Activated B cell treated with CpG ODN at 0.5 μM for 24 hours (primary cell): ENCODE measurements at regions of chr16 and their contacts with region 1.

Region 1: DNA sequence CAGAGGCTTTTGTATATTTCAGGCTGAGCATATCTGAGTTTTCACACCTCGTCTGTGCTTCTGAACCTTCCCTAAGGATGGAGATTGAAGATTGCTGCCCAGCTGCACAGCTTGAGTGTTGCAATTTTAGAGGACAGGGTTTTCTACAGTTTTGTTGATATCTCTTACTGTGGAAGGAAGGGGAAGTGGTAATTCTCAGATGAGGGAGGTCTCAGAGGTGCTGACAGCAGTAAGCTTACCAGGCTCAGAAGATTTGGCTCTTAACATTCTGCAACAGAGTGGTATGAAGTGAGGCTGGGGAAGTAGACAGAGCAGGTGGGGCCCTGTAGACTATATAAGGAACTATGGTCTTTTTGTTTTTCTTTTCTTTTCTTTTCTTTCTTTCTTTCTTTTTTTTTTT is 45.8 kb upstream of the ARHGAP17 start:
- DNase-seq: no peak
- ATAC-seq: peak; percentile 95
- H3K4me3 Mint-ChIP-seq: peak overlapping the region; percentile 41
- H3K27ac Mint-ChIP-seq: peak overlapping the region; percentile 92
- H3K4me1 Mint-ChIP-seq: peaks cover 49% of the 10 kb centered on the region
- H3K27me3 Mint-ChIP-seq: no peaks in the 10 kb centered on the region
- CTCF ChIP-seq: no peak

Region 2: DNA sequence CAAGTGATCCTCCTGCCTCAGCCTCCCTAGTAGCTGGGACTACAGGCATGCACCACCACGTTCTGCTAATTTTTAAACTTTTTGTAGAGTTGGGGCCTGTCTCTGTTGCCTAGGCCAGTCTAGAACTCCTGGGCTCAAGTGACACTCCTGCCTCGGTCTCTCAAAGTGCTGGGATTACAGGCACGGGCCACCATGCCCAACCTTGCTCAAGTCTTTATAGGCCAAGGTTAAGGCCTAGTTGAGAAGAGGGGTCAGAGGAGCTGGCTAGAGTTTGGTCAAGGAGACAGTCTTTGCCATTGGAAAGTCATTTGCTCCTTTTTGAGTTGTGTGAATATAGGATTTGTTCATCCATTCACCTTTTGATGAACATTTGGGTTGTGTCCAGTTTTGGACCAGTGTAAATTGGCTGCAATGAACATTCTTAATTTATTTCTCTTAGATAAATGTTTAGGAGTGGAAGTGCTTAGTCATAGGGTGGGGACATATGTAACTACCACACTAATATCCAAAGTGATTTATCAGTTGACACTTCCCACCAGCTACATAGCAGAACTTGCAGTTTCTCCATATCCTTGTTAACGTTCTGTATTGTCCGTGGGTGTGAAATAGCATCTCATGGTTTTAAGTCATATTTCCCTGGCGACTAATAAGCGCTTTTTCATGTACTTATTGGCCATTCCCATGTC is 15.1 kb before region 1 on chr16:
- CTCF ChIA-PET with region 1: no interaction called
- POLR2A ChIA-PET with region 1: interaction called, 16 read pairs
- intact Hi-C with region 1: no loop called
- DNase-seq: no peak
- ATAC-seq: no peak
- H3K4me3 Mint-ChIP-seq: no peak overlapping the region
- H3K27ac Mint-ChIP-seq: no peak overlapping the region
- H3K4me1 Mint-ChIP-seq: peaks cover 62% of the 10 kb centered on the region
- H3K27me3 Mint-ChIP-seq: no peaks in the 10 kb centered on the region
- CTCF ChIP-seq: no peak

Region 3: DNA sequence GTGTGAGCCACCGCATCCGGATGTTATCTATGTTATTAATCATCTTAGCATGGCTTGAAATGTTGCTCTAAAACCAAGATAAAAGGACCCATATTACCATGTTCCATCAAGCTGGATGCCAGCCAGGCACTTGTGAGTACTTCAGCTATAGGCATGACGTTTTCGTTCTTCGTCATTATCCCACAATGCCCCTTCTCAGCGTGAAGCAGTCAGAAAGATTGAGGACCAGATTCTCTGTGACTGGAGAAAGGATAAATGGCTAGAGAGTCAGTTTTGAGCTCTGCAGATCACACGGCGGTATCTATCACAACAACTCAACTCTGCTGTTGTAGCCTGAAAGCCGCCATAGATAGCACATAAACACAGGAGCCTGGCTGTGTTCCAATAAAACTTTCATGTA is 20.8 kb after region 1 on chr16:
- CTCF ChIA-PET with region 1: no interaction called
- POLR2A ChIA-PET with region 1: interaction called, 13 read pairs
- intact Hi-C with region 1: no loop called
- DNase-seq: no peak
- ATAC-seq: no peak
- H3K4me3 Mint-ChIP-seq: no peak overlapping the region
- H3K27ac Mint-ChIP-seq: no peak overlapping the region
- H3K4me1 Mint-ChIP-seq: peaks cover 4% of the 10 kb centered on the region
- H3K27me3 Mint-ChIP-seq: no peaks in the 10 kb centered on the region
- CTCF ChIP-seq: no peak

Region 4: GRCh38 chr16:26247063-26247462 is 1186.1 kb after region 1 on chr16:
- CTCF ChIA-PET with region 1: no interaction called
- POLR2A ChIA-PET with region 1: no interaction called
- intact Hi-C with region 1: no loop called
- DNase-seq: no peak
- ATAC-seq: no peak
- H3K4me3 Mint-ChIP-seq: no peak overlapping the region
- H3K27ac Mint-ChIP-seq: no peak overlapping the region
- H3K4me1 Mint-ChIP-seq: no peaks in the 10 kb centered on the region
- H3K27me3 Mint-ChIP-seq: no peaks in the 10 kb centered on the region
- CTCF ChIP-seq: no peak